MCF 10A (cell line): ENCODE measurements at regions of chr6 and their contacts with region 1.

Region 1: GRCh38 chr6:122947355-122947754 is 48.7 kb upstream of the CLVS2 start:
- DNase-seq: peak; percentile 47
- H3K4me3 Mint-ChIP-seq: no peak overlapping the region
- H3K27ac Mint-ChIP-seq: no peak overlapping the region
- H3K4me1 Mint-ChIP-seq: no peaks in the 10 kb centered on the region
- H3K27me3 Mint-ChIP-seq: no peaks in the 10 kb centered on the region
- CTCF ChIP-seq: peak; percentile 59

Region 2: DNA sequence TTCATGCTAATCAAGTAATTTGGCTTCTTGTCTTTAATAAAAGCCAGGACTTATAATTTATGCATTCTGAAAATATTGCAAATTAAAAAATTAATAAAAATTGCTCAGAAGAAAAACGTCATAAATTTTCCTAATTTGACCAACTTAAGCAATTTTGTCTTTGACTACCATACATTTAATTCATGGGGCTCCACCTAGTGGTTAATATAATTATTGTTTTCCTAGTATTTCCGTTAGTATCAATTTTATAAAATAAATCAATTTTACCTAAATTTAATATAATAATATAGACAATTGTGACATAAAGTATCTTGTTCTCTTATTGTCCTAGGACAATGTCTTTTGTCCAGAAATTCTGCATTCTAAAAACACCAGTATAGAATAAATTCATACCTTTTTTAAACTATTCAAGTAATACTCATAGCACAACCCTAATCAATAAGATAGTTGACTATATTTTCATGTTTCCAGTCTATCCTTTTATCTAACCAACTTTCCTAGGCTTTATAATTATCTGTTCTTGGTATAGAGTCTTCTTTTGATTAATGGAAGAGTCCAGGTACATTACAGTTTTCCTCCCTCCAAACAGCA is 369.5 kb after region 1 on chr6:
- CTCF ChIA-PET with region 1: interaction called, 12 read pairs
- POLR2A ChIA-PET with region 1: no interaction called
- intact Hi-C with region 1: loop called (anchors 1 kb)
- DNase-seq: peak; percentile 33
- H3K4me3 Mint-ChIP-seq: no peak overlapping the region
- H3K27ac Mint-ChIP-seq: no peak overlapping the region
- H3K4me1 Mint-ChIP-seq: no peaks in the 10 kb centered on the region
- H3K27me3 Mint-ChIP-seq: no peaks in the 10 kb centered on the region
- CTCF ChIP-seq: peak; percentile 53

Region 3: DNA sequence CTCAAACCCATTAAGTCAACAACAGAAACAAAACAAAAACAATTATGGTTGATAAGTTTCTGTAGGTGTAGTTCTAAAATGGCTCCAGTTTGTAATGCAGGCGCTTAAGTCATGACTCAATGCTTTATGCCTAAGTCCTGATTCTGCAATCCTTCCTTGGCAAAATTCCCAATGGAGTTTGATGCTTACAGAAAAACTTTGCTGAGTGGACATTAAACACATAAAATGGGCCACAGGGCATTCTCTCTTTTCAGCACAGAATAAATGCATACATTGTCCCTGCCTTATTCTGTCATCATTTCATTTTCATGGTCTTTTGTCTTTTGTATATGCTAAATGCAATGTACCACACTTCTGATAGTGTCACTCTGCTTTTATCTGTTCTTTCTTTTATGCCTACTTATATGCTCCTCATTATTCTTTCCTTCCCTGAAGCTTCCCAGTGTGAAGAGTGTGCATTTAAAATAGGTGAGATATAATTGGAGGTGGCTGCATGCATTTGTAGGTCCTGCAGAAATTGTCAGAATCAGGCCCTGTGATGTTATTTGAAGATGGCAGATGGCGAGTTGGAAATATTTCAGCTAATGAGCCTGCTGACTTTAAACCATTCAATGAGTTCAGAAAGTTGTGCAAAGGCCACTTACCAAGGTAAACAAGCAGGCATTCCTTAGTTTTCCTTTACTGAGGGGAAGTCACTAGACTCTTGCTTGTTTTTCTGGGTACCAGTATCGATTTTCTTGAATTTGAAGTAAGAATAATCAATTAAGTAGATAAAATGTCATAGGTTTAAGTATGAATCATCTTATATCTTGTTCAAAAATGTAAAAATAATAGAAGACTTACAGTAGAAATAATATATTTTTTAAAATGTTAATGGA is 376.3 kb after region 1 on chr6:
- CTCF ChIA-PET with region 1: interaction called, 12 read pairs
- POLR2A ChIA-PET with region 1: no interaction called
- intact Hi-C with region 1: no loop called
- DNase-seq: peak; percentile 86
- H3K4me3 Mint-ChIP-seq: no peak overlapping the region
- H3K27ac Mint-ChIP-seq: no peak overlapping the region
- H3K4me1 Mint-ChIP-seq: peaks cover 10% of the 10 kb centered on the region
- H3K27me3 Mint-ChIP-seq: peaks cover 12% of the 10 kb centered on the region
- CTCF ChIP-seq: no peak